Activated CD4-positive, alpha-beta memory T cell treated with anti-CD3 and anti-CD28 coated beads for 36 hours (primary cell): ENCODE measurements at regions of chr2 and their contacts with region 1.

Region 1: GRCh38 chr2:162890690-162891311 is 52.2 kb upstream of the KCNH7 start:
- DNase-seq: no peak
- H3K4me3 Mint-ChIP-seq: no peak overlapping the region
- H3K27ac Mint-ChIP-seq: no peak overlapping the region
- H3K4me1 Mint-ChIP-seq: no peaks in the 10 kb centered on the region
- H3K27me3 Mint-ChIP-seq: no peaks in the 10 kb centered on the region

Region 2: GRCh38 chr2:162174746-162175145 is 716.1 kb before region 1 on chr2:
- CTCF ChIA-PET with region 1: no interaction called
- POLR2A ChIA-PET with region 1: no interaction called
- intact Hi-C with region 1: no loop called
- DNase-seq: no peak
- H3K4me3 Mint-ChIP-seq: no peak overlapping the region
- H3K27ac Mint-ChIP-seq: no peak overlapping the region
- H3K4me1 Mint-ChIP-seq: peaks cover 5% of the 10 kb centered on the region
- H3K27me3 Mint-ChIP-seq: peaks cover 15% of the 10 kb centered on the region

Region 3: DNA sequence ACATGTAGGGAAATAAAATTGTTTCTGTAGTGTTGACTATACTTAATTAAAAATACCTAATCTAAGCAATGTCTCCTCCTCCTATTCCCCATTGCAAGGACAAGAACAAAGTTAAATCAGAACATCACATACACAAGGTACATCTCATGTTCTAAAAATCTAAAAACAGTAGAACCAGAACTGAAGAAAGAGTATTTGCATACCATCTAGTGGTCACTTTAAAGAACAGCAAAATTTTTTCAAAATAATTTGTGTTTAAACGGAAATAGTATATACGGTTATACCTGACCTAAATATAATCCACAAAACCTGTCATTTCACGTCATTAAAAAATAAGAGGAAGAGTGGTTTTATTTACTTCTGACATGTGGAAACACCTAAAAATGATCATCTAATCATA is 242.0 kb after region 1 on chr2:
- CTCF ChIA-PET with region 1: no interaction called
- POLR2A ChIA-PET with region 1: no interaction called
- intact Hi-C with region 1: loop called (anchors 1 kb)
- DNase-seq: no peak
- H3K4me3 Mint-ChIP-seq: no peak overlapping the region
- H3K27ac Mint-ChIP-seq: no peak overlapping the region
- H3K4me1 Mint-ChIP-seq: no peaks in the 10 kb centered on the region
- H3K27me3 Mint-ChIP-seq: no peaks in the 10 kb centered on the region